IMR-90 (cell line): ENCODE measurements at regions of chr7 and their contacts with region 1.

Region 1: DNA sequence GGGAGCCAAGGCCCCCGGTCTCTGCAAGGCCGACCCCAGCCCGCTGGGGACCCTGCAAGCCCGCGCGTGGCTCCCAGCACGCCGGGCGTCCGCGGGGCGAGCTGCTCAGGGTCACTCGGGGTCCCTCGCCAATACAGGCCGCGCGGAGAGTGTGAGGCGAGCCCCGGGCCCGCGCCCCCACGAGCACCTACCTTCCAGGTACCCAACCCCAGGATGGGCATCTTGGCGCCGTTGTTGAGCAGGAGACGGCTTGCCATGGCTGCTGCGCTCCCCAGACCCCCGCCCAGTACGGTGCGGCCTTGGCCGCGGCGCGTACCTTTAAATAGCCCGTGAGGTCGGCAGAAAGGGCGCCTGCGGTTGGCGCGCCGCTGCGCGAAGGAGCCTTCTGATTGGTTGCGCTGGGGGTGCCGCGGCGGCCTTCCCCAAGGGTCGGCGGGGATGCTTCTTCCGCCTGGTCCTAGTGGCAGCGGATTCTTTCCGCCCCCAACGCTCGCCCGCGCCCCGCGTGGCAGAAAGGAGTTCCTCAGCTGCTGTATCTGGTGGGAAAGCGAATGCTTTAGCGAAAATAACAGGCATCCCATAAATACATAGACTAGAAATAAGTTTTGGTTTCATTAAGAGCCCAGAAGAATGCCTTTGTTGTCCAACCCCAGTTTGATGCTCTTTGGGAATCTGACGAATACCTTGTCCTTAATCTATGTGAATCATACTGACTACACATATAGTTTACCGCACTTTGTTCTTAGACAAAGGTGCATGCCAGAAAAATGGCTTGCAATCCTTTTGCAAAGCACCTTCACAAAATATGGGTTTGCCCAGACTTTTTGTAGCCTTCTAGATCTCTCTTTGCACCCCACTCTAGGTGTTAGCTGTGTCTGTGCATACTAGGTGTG is at the start of gene AKR1B1:
- DNase-seq: peak; percentile 88
- ATAC-seq: peak; percentile 87
- H3K4me3 ChIP-seq: peak within 1 kb of the TSS; percentile 98
- H3K27ac ChIP-seq: peak within 1 kb of the TSS; percentile 78
- H3K4me1 ChIP-seq: peaks cover 21% of the 10 kb centered on the region
- H3K27me3 ChIP-seq: no peaks in the 10 kb centered on the region
- CTCF ChIP-seq: peak; percentile 67
- POLR2A ChIP-seq: peak; percentile 53; the same call in 1 of the 2 replicates
- RAD21 ChIP-seq: peak; percentile 24; the same call in 1 of the 2 replicates
- total RNA-seq, gene AKR1B1: 72.2 and 90.9 TPM in 2 replicates

Region 2: DNA sequence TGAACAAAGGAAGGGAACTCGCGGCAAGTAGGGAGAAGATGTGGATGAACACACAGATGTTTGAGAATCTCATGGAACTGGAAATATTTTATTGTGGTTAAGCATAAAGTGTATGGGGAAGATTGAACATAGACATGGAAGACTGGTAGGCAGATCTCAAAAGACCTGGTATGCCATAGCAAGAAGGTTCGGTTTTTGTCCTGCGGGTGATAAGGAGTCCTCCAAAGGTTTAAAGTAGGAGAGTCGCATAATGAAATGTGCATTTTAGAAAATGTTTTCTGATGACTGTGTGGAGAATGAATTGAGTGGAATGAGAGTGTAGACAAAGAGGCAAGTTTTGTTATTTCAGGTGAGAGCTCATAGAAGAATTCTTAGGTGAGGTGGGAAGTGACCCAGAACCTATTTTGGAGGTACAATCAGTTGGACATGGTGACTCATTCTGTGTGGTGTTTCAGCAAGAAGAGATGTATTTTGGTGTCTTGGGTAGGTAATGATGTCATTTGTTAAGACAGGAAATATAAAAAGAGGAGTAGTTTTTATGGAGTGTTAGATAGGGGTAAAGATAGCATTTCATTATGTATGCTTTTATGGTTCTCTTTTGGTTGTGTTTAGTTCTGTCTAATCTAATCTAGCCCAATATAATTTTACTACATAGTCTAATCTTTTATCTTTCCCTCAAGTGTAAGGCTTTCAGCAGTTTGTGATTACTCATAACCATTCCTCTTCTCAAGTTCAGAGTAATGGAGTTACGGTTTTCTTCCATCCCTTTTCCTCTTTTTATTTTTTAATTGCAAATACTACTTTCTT is 967.0 kb before region 1 on chr7:
- CTCF ChIA-PET with region 1: no interaction called
- POLR2A ChIA-PET with region 1: no interaction called
- dilution Hi-C with region 1: no loop called
- in situ Hi-C with region 1: no loop called
- intact Hi-C with region 1: no loop called
- DNase-seq: peak; percentile 40
- ATAC-seq: no peak
- H3K4me3 ChIP-seq: no peak overlapping the region
- H3K27ac ChIP-seq: no peak overlapping the region
- H3K4me1 ChIP-seq: no peaks in the 10 kb centered on the region
- H3K27me3 ChIP-seq: no peaks in the 10 kb centered on the region
- CTCF ChIP-seq: no peak
- POLR2A ChIP-seq: no peak
- RAD21 ChIP-seq: no peak

Region 3: GRCh38 chr7:134474828-134475227 is 15.8 kb after region 1 on chr7:
- CTCF ChIA-PET with region 1: interaction called, 16 read pairs
- POLR2A ChIA-PET with region 1: interaction called, 11 read pairs
- dilution Hi-C with region 1: no loop called
- in situ Hi-C with region 1: no loop called
- intact Hi-C with region 1: no loop called
- DNase-seq: no peak
- ATAC-seq: no peak
- H3K4me3 ChIP-seq: no peak overlapping the region
- H3K27ac ChIP-seq: no peak overlapping the region
- H3K4me1 ChIP-seq: no peaks in the 10 kb centered on the region; the same call in 1 of the 2 replicates
- H3K27me3 ChIP-seq: no peaks in the 10 kb centered on the region
- CTCF ChIP-seq: no peak
- POLR2A ChIP-seq: no peak
- RAD21 ChIP-seq: no peak

Region 4: DNA sequence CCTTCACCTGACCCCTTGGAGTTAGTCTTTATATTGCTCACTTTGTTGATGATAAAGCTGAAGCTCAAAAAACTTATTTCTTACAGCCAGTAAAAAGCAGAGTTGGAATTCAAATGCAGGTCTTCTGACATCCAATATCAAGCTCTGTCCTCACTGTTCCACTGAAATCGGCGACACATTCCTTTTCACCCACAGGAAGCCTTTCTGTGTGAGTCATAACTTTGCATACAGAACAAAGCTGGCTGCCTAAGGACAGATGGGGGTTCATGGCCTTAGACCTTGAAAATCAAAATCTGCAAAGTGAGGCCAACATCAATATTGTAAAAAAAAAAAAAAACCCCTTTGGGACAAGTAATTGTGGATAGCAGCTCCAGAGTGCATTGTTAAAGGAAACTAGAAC is 21.7 kb after region 1 on chr7:
- CTCF ChIA-PET with region 1: interaction called, 16 read pairs
- POLR2A ChIA-PET with region 1: no interaction called
- dilution Hi-C with region 1: no loop called
- in situ Hi-C with region 1: no loop called
- intact Hi-C with region 1: no loop called
- DNase-seq: peak; percentile 35
- ATAC-seq: peak; percentile 79
- H3K4me3 ChIP-seq: no peak overlapping the region
- H3K27ac ChIP-seq: no peak overlapping the region
- H3K4me1 ChIP-seq: peaks cover 4% of the 10 kb centered on the region
- H3K27me3 ChIP-seq: no peaks in the 10 kb centered on the region
- CTCF ChIP-seq: no peak
- POLR2A ChIP-seq: no peak
- RAD21 ChIP-seq: no peak

Region 5: GRCh38 chr7:134514663-134515062 is 55.6 kb after region 1 on chr7:
- CTCF ChIA-PET with region 1: interaction called, 10 read pairs
- POLR2A ChIA-PET with region 1: no interaction called
- dilution Hi-C with region 1: no loop called
- in situ Hi-C with region 1: no loop called
- intact Hi-C with region 1: no loop called
- DNase-seq: peak; percentile 83
- ATAC-seq: peak; percentile 66
- H3K4me3 ChIP-seq: no peak overlapping the region
- H3K27ac ChIP-seq: no peak overlapping the region
- H3K4me1 ChIP-seq: peaks cover 2% of the 10 kb centered on the region; the same call in 1 of the 2 replicates
- H3K27me3 ChIP-seq: no peaks in the 10 kb centered on the region
- CTCF ChIP-seq: peak; percentile 80
- POLR2A ChIP-seq: no peak
- RAD21 ChIP-seq: peak; percentile 61

Region 6: DNA sequence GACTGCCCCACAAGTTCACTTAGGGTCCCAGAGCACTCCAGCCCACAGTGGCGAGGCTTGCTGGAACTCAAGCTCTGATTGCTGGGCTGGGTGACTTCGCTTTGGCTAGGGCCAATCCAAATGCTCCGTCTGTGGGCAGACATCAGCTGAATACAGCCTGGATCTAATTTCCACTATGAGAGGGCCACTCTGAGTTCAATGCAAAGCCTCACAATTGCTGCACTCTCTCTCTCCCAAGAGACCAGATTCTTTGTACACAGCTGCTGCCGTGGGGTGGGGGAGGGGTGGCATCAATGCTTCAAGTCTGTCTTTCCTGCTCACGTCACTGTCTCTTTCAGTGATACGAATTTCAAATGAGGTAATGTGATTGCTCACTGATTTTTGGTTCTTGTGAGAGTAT is 140.3 kb after region 1 on chr7:
- CTCF ChIA-PET with region 1: no interaction called
- POLR2A ChIA-PET with region 1: no interaction called
- dilution Hi-C with region 1: no loop called
- in situ Hi-C with region 1: no loop called
- intact Hi-C with region 1: no loop called
- DNase-seq: no peak
- ATAC-seq: no peak
- H3K4me3 ChIP-seq: no peak overlapping the region
- H3K27ac ChIP-seq: no peak overlapping the region
- H3K4me1 ChIP-seq: peaks cover 6% of the 10 kb centered on the region; the same call in 1 of the 2 replicates
- H3K27me3 ChIP-seq: no peaks in the 10 kb centered on the region
- CTCF ChIP-seq: no peak
- POLR2A ChIP-seq: no peak
- RAD21 ChIP-seq: no peak

Region 7: DNA sequence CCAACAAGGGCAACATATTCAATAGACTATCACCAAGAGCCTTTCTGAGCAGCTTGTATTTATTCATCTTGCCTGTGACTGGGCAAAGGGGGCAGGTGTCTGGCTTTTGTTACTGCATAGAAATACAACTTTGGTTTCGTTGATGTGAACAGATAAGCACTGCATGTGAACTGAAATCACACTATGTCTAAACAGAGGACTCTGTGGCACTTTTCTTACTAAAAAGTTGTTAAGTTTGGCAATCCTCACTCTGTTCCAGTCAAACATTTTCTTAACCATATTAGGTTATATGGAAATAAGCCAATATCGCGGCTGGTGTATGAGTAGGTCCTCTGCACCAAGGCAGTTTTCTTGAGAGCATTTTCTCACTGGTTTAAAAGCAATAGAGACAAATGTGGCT is 368.8 kb after region 1 on chr7:
- CTCF ChIA-PET with region 1: no interaction called
- POLR2A ChIA-PET with region 1: no interaction called
- dilution Hi-C with region 1: no loop called
- in situ Hi-C with region 1: no loop called
- intact Hi-C with region 1: no loop called
- DNase-seq: peak; percentile 84
- ATAC-seq: peak; percentile 60
- H3K4me3 ChIP-seq: no peak overlapping the region
- H3K27ac ChIP-seq: peak overlapping the region; percentile 39; the same call in 1 of the 2 replicates
- H3K4me1 ChIP-seq: peaks cover 30% of the 10 kb centered on the region
- H3K27me3 ChIP-seq: no peaks in the 10 kb centered on the region
- CTCF ChIP-seq: no peak
- POLR2A ChIP-seq: no peak; the same call in 1 of the 2 replicates
- RAD21 ChIP-seq: no peak